Ascending aorta (tissue), 2 donors: ENCODE measurements at regions of chr5 and their contacts with region 1.

Region 1: DNA sequence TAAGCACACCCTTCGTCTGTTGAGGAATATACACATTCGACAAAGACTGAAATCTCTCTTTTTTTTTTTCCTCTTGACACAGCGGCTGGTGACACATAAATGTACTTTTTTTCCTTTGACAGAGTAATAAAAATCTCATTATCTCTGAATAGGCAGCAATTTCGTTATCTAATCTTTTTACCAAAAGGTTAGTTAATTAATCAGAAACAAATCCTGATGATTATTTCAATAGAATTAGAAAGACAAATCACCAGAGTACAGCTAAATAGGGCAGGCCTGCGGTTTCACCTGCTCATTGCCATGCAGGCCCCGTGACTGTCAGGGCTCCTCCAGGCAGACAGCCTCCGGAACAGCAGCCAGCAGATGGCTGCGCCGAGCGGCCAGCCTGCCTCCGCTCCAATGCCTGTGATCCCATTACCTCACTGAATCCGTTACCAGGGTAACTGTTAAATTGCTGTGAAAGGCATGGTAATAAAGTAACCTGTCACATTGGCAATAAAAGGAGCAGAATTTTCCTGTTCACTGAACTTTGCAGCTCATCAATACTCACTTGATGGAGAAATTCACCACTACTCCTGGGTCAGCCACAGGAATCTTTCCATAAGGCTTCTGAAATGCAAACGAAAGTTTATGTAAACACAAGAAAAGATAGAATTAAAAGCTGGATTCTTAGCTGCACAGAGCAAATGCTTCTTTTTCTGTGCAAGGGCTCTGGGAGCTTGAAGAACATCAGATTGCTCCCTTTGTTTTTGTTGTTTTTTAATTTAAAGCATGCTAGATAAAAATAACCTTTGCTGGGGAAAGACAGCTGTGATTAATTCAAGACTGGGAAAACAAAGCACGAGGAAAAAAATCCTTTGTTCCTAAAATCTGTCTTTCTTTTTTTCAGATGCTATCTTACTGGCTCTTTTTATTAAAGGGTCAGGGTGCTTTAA is 666.4 kb upstream of the ZNF608 start:
- DNase-seq: peak in 1 of 2 donors; percentile 80
- H3K4me3 ChIP-seq: peak overlapping the region; percentile 1 to 48
- H3K27ac ChIP-seq: peak overlapping the region in 1 of 2 donors; percentile 69
- H3K4me1 ChIP-seq: peaks cover 3 to 31% of the 10 kb centered on the region in 2 donors
- H3K27me3 ChIP-seq: no peaks in the 10 kb centered on the region
- CTCF ChIP-seq: peak in 2 of 3 experiments; percentile 45 to 51

Region 2: GRCh38 chr5:124677374-124678351 is 735.2 kb before region 1 on chr5:
- intact Hi-C with region 1: loop called (anchors 10 kb)
- DNase-seq: no peak
- H3K4me3 ChIP-seq: peak overlapping the region in 1 of 2 donors; percentile 24
- H3K27ac ChIP-seq: peak overlapping the region; percentile 66 to 78
- H3K4me1 ChIP-seq: peaks cover 12 to 13% of the 10 kb centered on the region in 2 donors
- H3K27me3 ChIP-seq: no peaks in the 10 kb centered on the region
- CTCF ChIP-seq: no peak

Region 3: DNA sequence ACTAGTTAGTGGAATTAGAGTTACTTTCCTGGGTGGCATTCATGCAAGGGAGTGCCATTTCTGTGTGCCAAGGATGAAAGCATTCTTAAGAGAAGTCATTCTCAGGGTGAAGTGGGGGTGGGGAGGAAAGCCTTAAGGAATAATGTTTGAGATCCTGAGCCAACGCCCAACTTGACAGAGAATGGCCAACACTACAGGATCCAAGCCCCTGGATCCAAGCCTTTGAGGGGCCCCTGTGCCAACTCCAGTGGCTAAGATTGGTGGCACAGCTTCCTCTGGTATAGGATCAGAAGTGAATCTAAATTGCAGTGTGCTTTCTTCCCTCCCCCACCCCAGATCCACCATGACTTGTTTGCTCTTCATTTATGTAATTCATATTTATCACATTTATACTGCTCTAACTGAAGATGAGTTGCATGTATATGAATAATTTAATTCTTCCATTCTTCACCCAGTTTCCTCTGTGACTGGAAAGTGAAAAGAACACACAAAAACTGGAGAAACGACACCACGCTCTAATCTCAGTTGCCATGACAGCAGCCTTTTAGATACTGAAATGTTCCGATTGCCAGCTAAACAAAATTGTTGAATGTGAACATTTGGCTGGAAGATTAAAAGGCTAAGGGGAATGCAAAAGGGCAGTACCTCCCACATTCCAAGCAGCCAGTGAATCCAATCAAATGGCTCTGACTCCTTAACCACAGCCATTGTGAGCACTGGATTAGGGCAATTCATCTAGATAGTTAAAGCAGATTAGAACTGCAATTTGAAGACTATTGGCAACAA is 670.9 kb before region 1 on chr5:
- intact Hi-C with region 1: loop called (anchors 2 kb)
- DNase-seq: no peak
- H3K4me3 ChIP-seq: peak overlapping the region; percentile 12 to 70
- H3K27ac ChIP-seq: no peak overlapping the region
- H3K4me1 ChIP-seq: peaks cover 3 to 5% of the 10 kb centered on the region in 2 donors
- H3K27me3 ChIP-seq: no peaks in the 10 kb centered on the region
- CTCF ChIP-seq: no peak

Region 4: GRCh38 chr5:124902097-124902821 is 510.6 kb before region 1 on chr5:
- intact Hi-C with region 1: loop called (anchors 5 kb)
- DNase-seq: no peak
- H3K4me3 ChIP-seq: no peak overlapping the region
- H3K27ac ChIP-seq: no peak overlapping the region
- H3K4me1 ChIP-seq: peaks cover 1 to 14% of the 10 kb centered on the region in 2 donors
- H3K27me3 ChIP-seq: no peaks in the 10 kb centered on the region
- CTCF ChIP-seq: no peak

Region 5: DNA sequence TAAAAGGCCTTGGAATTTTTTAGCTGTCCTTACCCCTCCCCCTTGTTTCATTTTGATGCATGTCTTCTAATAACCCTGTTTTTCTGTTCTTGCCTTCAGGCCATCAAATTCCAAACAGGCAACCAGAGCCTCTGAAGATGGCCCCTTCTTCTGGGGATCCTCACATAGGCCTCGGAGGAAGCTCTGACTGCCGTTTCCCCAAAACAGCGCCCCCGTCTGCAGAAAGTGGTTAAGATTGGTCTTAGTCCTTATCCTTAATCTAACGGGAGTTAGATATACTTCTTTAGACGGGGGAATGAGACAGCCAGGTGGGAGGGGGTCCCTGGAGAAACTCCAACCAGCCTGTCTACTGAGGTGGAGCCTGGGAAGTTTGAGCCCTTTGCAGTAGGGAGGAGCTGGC is 440.1 kb before region 1 on chr5:
- intact Hi-C with region 1: no loop called
- DNase-seq: no peak
- H3K4me3 ChIP-seq: no peak overlapping the region
- H3K27ac ChIP-seq: no peak overlapping the region
- H3K4me1 ChIP-seq: no peaks in the 10 kb centered on the region
- H3K27me3 ChIP-seq: no peaks in the 10 kb centered on the region
- CTCF ChIP-seq: no peak

Region 6: DNA sequence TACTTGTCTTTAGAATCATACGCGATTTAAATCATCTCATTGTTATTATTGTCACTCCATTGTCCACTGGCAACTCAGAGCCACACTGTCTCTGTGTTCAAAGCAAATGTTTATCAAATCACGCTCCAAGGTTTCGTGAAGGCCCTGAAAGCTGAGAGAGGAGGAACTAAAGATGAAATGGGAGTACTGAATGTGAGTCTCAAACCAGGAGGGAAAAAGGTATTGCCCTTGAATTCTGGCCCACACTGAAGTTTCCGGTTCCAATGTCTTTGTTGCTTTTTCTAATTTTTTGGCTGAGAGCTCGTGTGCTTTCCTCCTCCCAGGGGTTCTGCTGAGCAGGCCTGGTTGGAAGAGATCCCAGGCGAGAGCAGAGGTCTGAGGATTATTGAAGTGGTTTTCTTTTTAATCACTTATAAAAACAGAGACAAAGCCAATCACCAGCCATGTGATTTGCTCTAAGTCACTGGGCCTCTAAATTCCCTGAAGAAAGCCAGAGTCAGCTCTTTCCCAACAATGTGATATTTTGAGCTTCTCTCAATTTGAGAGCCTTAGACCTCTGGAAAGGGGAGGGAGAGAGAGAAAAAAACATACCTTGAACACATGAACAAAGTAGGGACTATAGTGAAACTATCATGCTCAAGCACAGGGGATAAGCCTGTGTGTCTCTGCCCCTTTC is 589.5 kb after region 1 on chr5:
- intact Hi-C with region 1: loop called (anchors 10 kb)
- DNase-seq: peak; percentile 16 to 88
- H3K4me3 ChIP-seq: no peak overlapping the region
- H3K27ac ChIP-seq: peak overlapping the region; percentile 55 to 72
- H3K4me1 ChIP-seq: peaks cover 0 to 21% of the 10 kb centered on the region in 2 donors
- H3K27me3 ChIP-seq: no peaks in the 10 kb centered on the region
- CTCF ChIP-seq: no peak